Vagina (tissue), 2 donors: ENCODE measurements at regions of chr9 and their contacts with region 1.

Region 1: GRCh38 chr9:35508069-35508468 is 18.2 kb downstream of the RUSC2 start:
- DNase-seq: no peak
- H3K4me3 ChIP-seq: no peak overlapping the region
- H3K27ac ChIP-seq: no peak overlapping the region
- H3K4me1 ChIP-seq: peaks cover 45% of the 10 kb centered on the region
- H3K27me3 ChIP-seq: no peaks in the 10 kb centered on the region
- CTCF ChIP-seq: no peak
- POLR2A ChIP-seq: no peak

Region 2: DNA sequence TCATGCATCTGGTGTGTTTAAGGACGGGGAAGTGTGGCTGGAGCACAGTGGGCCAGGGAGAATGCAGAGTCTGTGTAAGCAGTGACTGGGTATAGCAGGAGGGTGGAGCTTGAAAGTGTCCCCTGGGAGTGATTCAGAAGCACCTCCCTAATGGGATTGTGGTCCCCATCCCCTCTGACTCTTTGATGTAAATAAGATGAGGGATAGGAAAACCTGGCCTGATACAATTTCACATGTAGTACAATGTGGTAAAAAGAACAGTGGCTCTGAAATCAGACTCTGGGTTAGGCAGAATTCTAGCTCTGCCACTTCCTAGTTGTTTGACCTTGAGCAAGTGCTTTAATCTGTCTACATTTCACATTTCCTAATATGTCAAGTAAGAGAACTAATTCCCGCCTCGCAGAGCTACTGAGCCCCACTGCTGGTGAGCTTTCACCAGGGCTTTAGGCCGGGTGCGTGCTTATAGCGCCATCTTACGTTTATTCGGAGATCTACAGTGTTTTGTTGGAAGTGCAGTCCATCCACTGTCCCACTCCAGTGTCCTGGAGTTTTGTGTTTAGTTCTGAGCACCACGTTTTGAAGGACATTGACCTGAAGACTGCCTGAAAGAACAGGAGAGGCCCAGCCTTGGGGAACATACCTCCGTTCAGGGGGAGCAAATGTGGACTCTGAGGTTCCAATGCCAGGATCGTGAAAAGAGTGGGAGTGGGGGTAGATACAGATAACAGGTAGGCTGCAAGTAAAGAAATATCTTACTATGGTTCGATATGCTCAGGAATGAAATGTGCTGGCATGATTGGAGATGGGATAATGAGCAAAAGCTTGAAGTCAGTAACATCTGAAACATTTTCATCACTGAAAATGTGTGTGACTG is 45.8 kb after region 1 on chr9:
- intact Hi-C with region 1: loop called (anchors 5 kb)
- DNase-seq: no peak
- H3K4me3 ChIP-seq: no peak overlapping the region
- H3K27ac ChIP-seq: peak overlapping the region; percentile 56
- H3K4me1 ChIP-seq: peaks cover 26% of the 10 kb centered on the region
- H3K27me3 ChIP-seq: no peaks in the 10 kb centered on the region
- CTCF ChIP-seq: peak; percentile 68 to 85 (median 74)
- POLR2A ChIP-seq: no peak

Region 3: GRCh38 chr9:35628389-35628991 is 120.4 kb after region 1 on chr9:
- intact Hi-C with region 1: no loop called
- DNase-seq: no peak
- H3K4me3 ChIP-seq: no peak overlapping the region
- H3K27ac ChIP-seq: no peak overlapping the region
- H3K4me1 ChIP-seq: no peaks in the 10 kb centered on the region
- H3K27me3 ChIP-seq: no peaks in the 10 kb centered on the region
- CTCF ChIP-seq: no peak
- POLR2A ChIP-seq: no peak